ENCODE measurements at regions of chrX and their contacts with region 1.

Region 1: DNA sequence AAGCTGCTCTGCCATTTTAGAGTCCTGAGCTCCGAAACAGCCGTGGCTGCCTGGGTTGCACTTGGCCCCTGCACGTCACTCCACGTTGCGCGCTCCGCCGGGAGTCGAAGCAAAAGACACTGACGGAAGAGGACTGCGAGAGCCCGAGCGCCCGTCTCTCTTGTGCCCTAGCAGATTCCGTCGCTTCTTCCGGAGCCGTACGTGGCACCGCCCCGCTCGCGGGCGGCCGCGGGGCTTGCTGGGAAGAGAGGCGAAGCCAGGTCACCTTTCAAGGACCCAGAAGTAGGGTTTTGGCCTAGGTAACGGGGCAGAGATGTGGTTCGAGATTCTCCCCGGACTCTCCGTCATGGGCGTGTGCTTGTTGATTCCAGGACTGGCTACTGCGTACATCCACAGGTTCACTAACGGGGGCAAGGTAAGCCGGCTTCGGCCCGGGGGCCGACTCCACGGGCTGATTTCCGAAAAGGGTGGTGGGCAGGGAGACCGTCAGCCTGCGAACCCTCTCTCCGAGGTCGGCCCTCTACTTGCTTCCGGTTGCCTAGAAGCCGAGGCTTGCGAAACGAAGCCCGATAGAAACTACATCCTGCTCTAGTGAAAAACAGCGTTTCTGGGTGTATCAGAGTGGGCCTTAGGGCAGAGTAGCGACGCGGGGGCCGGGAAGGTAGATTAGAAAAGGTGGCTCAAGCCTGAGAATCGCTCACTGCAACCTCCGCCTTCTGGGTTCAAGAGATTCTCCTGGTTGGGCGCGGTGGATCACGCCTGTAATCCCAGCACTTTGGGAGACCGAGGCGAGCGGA is at the starts of genes NDUFA1 and RNF113A:
- DNase-seq: peak; percentile 69 to 94 (median 81)
- ATAC-seq: peak; percentile 87
- H3K4me3 ChIP-seq: peak within 1 kb of the TSS; percentile 77 to 80
- H3K4me3 Mint-ChIP-seq: peak within 1 kb of the TSS; percentile 97
- H3K27ac ChIP-seq: peak within 1 kb of the TSS; percentile 95 to 97
- H3K27ac Mint-ChIP-seq: peak within 1 kb of the TSS; percentile 99
- H3K4me1 ChIP-seq: peaks cover 7% of the 10 kb centered on the region
- H3K4me1 Mint-ChIP-seq: peaks cover 27% of the 10 kb centered on the region
- H3K27me3 ChIP-seq: no peaks in the 10 kb centered on the region
- H3K27me3 Mint-ChIP-seq: no peaks in the 10 kb centered on the region
- CTCF ChIP-seq: no peak
- total RNA-seq, gene NDUFA1: 48.3 to 51.0 TPM
- total RNA-seq, gene RNF113A: 27.8 to 29.4 TPM

Region 2: DNA sequence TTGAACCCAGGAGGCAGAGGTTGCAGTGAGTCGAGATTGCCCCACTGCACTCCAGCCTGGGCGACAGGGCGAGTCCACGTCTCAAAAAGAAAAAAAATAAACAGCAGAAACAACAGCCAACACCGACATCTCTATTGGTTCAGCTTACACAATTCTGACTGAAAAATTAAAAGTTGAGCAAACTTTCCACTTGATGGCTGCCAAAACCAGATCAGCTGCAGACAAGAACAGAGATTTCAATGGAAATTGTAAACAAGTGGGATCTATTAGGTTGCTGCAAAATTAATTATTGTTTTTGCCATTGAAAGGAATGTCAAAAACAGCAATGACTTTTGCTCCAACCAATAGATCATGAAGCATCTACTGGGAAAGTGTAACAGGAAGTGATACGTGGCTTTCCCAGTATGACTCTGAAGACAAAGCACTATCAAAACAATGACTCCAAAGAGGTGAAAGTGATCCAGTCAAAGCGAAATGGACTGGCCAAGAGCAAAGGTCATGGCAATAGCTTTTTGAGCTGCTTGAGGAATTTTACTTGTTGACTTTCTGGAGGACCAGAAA is 45.3 kb before region 1 on chrX:
- CTCF ChIA-PET with region 1: no interaction called
- POLR2A ChIA-PET with region 1: interaction called, 4 read pairs
- intact Hi-C with region 1: loop called in 1 of 2 experiments (anchors 2 kb)
- DNase-seq: no peak
- ATAC-seq: no peak
- H3K4me3 ChIP-seq: no peak overlapping the region
- H3K4me3 Mint-ChIP-seq: no peak overlapping the region
- H3K27ac ChIP-seq: no peak overlapping the region
- H3K27ac Mint-ChIP-seq: no peak overlapping the region
- H3K4me1 ChIP-seq: no peaks in the 10 kb centered on the region
- H3K4me1 Mint-ChIP-seq: peaks cover 11% of the 10 kb centered on the region
- H3K27me3 ChIP-seq: no peaks in the 10 kb centered on the region
- H3K27me3 Mint-ChIP-seq: no peaks in the 10 kb centered on the region
- CTCF ChIP-seq: no peak

Region 3: GRCh38 chrX:119943185-119943988 is 71.6 kb after region 1 on chrX and contains the start of gene NKAP:
- CTCF ChIA-PET with region 1: no interaction called
- POLR2A ChIA-PET with region 1: no interaction called
- intact Hi-C with region 1: loop called (anchors 1 kb)
- DNase-seq: peak; percentile 59 to 90 (median 78)
- ATAC-seq: peak; percentile 82
- H3K4me3 ChIP-seq: peak within 1 kb of the TSS; percentile 94
- H3K4me3 Mint-ChIP-seq: peak within 1 kb of the TSS; percentile 97
- H3K27ac ChIP-seq: peak within 1 kb of the TSS; percentile 91 to 93
- H3K27ac Mint-ChIP-seq: peak within 1 kb of the TSS; percentile 97
- H3K4me1 ChIP-seq: peaks cover 18% of the 10 kb centered on the region
- H3K4me1 Mint-ChIP-seq: peaks cover 24% of the 10 kb centered on the region
- H3K27me3 ChIP-seq: no peaks in the 10 kb centered on the region
- H3K27me3 Mint-ChIP-seq: peaks cover under 1% of the 10 kb centered on the region
- CTCF ChIP-seq: no peak
- total RNA-seq, gene NKAP: 17.4 to 20.1 TPM

Region 4: GRCh38 chrX:120250522-120251271 is 378.9 kb after region 1 on chrX and contains the start of gene ZBTB33:
- CTCF ChIA-PET with region 1: no interaction called
- POLR2A ChIA-PET with region 1: no interaction called
- intact Hi-C with region 1: loop called (anchors 5 kb)
- DNase-seq: peak; percentile 68 to 94 (median 79)
- ATAC-seq: peak; percentile 99
- H3K4me3 ChIP-seq: peak within 1 kb of the TSS; percentile 58 to 68
- H3K4me3 Mint-ChIP-seq: peak within 1 kb of the TSS; percentile 92
- H3K27ac ChIP-seq: peak within 1 kb of the TSS; percentile 82 to 91
- H3K27ac Mint-ChIP-seq: peak within 1 kb of the TSS; percentile 98
- H3K4me1 ChIP-seq: no peaks in the 10 kb centered on the region
- H3K4me1 Mint-ChIP-seq: peaks cover 37% of the 10 kb centered on the region
- H3K27me3 ChIP-seq: no peaks in the 10 kb centered on the region
- H3K27me3 Mint-ChIP-seq: peaks cover 2% of the 10 kb centered on the region
- CTCF ChIP-seq: peak; percentile 52
- total RNA-seq, gene ZBTB33: 26.4 to 30.7 TPM

Measured in CD8-positive, alpha-beta T cell (primary cell).